Esophagus squamous epithelium (tissue), 5 donors: ENCODE measurements at regions of chr2 and their contacts with region 1.

Region 1: GRCh38 chr2:217785544-217786045 is 217.2 kb downstream of the TNS1 start:
- DNase-seq: no peak
- H3K4me3 ChIP-seq: no peak overlapping the region
- H3K27ac ChIP-seq: peak overlapping the region in 1 of 4 donors; percentile 49
- H3K4me1 ChIP-seq: peaks cover 0 to 23% (median 8%) of the 10 kb centered on the region in 3 donors
- H3K27me3 ChIP-seq: no peaks in the 10 kb centered on the region
- CTCF ChIP-seq: peak; percentile 92 to 97 (median 94)
- POLR2A ChIP-seq: no peak

Region 2: DNA sequence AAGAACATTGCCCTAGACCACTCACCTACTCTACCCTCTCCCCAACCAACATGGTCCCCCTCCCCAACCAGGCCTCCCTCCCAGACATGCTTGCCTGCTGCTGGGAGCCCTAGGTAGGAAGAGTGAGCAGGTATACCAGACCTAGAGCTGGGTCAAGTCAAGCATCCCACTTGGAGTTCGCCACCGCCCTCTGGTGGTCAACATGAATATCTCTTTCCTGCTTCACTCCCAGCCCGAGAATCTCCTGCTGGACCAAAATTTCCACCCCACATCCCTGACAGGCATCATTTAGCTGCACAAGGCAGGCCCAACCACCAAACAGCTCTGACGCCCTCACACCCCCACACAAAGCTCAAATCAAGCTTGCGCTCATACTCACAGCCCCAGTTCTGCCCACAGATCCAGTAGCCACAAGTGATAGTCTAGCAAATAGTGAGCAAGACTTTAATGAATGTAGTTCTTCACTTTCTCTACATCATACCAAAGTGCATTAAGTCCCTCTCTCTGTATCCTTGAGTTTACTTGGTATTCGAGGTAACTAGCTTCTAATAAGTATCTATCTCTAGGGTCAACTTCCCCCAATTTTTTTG is 101.2 kb after region 1 on chr2:
- intact Hi-C with region 1: loop called (anchors 5 kb)
- DNase-seq: no peak
- H3K4me3 ChIP-seq: no peak overlapping the region
- H3K27ac ChIP-seq: peak overlapping the region in 3 of 4 donors; percentile 1 to 60 (median 36)
- H3K4me1 ChIP-seq: peaks cover 0 to 43% (median 10%) of the 10 kb centered on the region in 3 donors
- H3K27me3 ChIP-seq: no peaks in the 10 kb centered on the region
- CTCF ChIP-seq: peak; percentile 66 to 86 (median 76)
- POLR2A ChIP-seq: no peak

Region 3: DNA sequence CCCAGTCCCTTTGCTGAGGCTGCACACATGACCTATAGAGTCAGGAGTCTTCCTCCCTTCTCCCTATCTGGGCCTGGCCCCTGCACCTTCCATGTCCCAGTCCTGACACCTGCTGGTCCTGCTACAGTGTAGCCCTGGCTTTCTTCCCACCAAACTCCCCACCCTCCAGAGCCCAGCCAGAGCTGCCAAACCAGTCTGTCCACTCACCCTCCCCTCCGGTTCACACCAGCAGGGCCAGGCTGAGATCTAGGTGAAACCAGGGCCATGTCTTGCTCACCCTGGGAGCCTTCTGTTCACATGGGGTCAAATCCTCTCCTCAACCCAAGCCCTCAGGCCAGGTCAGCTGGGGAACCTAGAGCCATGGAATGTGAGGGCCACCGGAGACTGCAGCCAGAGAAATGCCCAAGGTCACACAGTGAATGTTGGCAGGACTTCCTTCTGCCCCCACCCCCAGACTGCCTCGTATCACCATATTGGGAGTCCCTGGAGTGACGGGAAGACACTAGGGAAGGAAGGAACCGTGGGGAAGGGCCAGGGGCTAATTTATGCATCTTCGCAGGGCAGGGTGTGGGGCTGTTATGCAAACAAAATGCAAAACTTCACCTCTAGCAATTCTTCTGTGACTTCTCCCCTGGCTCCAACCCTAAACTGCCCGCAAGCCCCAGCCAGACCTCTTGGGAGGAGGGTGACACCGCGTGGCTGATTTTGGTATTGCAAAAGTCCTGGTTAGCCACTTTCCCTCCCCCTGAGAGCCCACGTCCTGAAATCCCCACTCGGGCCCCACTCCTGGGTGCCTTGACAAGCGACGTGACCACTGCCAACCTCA is 202.6 kb after region 1 on chr2:
- intact Hi-C with region 1: loop called (anchors 5 kb)
- DNase-seq: no peak
- H3K4me3 ChIP-seq: peak overlapping the region in 2 of 4 donors; percentile 22 to 39
- H3K27ac ChIP-seq: peak overlapping the region; percentile 67 to 85 (median 84)
- H3K4me1 ChIP-seq: peaks cover 17 to 37% (median 27%) of the 10 kb centered on the region in 3 donors
- H3K27me3 ChIP-seq: no peaks in the 10 kb centered on the region
- CTCF ChIP-seq: peak; percentile 35 to 92 (median 87)
- POLR2A ChIP-seq: no peak

Region 4: GRCh38 chr2:218063486-218063885 is 277.9 kb after region 1 on chr2:
- intact Hi-C with region 1: loop called (anchors 10 kb)
- DNase-seq: no peak
- H3K4me3 ChIP-seq: no peak overlapping the region
- H3K27ac ChIP-seq: no peak overlapping the region
- H3K4me1 ChIP-seq: peaks cover 1 to 2% (median 1%) of the 10 kb centered on the region in 3 donors
- H3K27me3 ChIP-seq: peaks cover 0 to 28% (median 0%) of the 10 kb centered on the region in 4 donors
- CTCF ChIP-seq: no peak
- POLR2A ChIP-seq: no peak